Activated CD4-positive, alpha-beta T cell treated with anti-CD3 and anti-CD28 coated beads, Interleukin-2, amount 10 ng/mL, durations not matched to agents 7 days and 5 days (primary cell): ENCODE measurements at regions of chr17 and their contacts with region 1.

Region 1: GRCh38 chr17:45270828-45271418 is 9.0 kb upstream of the SPATA32 start:
- DNase-seq: peak; percentile 58
- H3K4me3 Mint-ChIP-seq: no peak overlapping the region
- H3K27ac Mint-ChIP-seq: no peak overlapping the region
- H3K4me1 Mint-ChIP-seq: no peaks in the 10 kb centered on the region
- H3K27me3 Mint-ChIP-seq: no peaks in the 10 kb centered on the region

Region 2: GRCh38 chr17:45123930-45124796 is 146.8 kb before region 1 on chr17:
- CTCF ChIA-PET with region 1: no interaction called
- POLR2A ChIA-PET with region 1: no interaction called
- DNase-seq: no peak
- H3K4me3 Mint-ChIP-seq: no peak overlapping the region
- H3K27ac Mint-ChIP-seq: no peak overlapping the region
- H3K4me1 Mint-ChIP-seq: no peaks in the 10 kb centered on the region
- H3K27me3 Mint-ChIP-seq: peaks cover 7% of the 10 kb centered on the region

Region 3: DNA sequence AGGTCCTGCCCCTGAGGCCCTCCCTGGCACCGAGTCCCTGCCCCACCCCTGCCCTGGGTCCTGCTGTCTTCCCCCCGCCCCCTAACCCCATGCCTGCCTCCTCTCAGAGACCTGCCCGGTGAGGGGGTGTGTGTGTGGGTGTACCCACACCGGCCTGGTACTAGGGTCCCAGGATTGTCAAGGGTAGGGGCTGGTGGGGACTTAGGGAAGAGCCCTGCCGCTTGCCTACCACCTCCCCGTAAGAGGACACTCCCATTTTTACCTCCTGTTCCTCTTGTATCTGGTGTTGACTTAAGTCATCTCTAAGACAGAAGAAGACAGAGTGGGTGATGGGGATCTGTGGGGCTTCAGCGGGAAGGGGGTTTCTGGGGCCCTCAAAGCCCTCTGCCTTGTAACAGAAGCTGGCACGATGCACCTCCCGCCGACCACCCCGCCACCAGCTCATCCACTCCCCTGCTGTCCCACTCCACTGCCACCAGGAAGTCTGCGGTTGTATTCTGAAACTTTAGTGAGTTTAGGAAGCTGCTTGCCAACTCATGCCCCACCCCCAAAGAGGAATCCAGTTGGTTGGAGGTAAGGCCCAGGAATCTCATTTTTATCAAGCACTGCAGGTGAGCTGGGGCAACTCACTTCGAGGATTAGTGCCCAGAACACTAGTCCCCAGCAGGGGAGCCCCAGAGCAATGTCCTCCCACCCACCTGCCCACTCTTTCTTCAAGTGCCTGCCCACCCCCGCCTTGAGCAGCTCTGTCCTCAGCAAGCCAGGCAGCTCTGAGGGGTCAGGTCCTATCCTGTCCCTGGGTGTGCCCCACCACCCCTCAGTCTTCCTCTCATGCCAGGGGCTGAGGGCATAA is 14.6 kb before region 1 on chr17:
- CTCF ChIA-PET with region 1: interaction called, 15 read pairs
- POLR2A ChIA-PET with region 1: no interaction called
- DNase-seq: peak; percentile 26
- H3K4me3 Mint-ChIP-seq: no peak overlapping the region
- H3K27ac Mint-ChIP-seq: peak overlapping the region; percentile 75
- H3K4me1 Mint-ChIP-seq: peaks cover 54% of the 10 kb centered on the region
- H3K27me3 Mint-ChIP-seq: no peaks in the 10 kb centered on the region

Region 4: DNA sequence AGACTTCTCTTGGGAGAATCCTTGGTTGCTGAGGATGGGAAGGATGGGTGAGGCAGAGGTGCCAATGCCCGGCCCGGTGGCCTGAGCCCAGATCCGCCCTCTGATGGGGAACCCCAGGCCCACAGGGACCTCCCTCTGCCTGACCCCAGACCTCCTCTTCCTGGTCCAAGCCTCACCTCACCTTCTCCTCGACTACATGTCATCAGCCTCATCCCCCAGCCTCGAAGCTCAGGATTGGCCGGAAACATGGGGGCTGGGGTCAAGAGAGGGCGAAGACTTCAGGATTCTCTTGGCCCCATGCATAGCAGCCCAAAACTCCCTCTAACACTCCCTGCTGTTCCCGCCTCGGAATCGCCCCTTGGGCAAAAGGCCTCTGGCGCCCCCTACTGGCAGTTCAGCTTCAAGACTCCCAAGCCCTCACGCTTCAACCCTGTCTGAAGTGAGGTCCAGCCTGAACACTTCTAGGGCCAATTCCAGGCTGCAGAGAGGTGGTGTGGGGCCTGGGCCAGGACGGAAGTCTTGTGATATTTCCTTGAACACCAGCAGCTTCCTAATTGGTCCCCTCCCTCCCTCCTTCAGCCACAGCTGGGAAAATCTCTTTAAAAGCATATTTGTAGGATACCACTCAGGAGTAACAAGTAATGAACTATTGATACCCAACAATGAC is 114.5 kb after region 1 on chr17:
- CTCF ChIA-PET with region 1: interaction called, 55 read pairs
- POLR2A ChIA-PET with region 1: no interaction called
- DNase-seq: peak; percentile 91
- H3K4me3 Mint-ChIP-seq: no peak overlapping the region
- H3K27ac Mint-ChIP-seq: peak overlapping the region; percentile 80
- H3K4me1 Mint-ChIP-seq: peaks cover 20% of the 10 kb centered on the region
- H3K27me3 Mint-ChIP-seq: peaks cover 14% of the 10 kb centered on the region

Region 5: GRCh38 chr17:45631941-45632340 is 361.0 kb after region 1 on chr17:
- CTCF ChIA-PET with region 1: no interaction called
- POLR2A ChIA-PET with region 1: no interaction called
- DNase-seq: no peak
- H3K4me3 Mint-ChIP-seq: no peak overlapping the region
- H3K27ac Mint-ChIP-seq: no peak overlapping the region
- H3K4me1 Mint-ChIP-seq: no peaks in the 10 kb centered on the region
- H3K27me3 Mint-ChIP-seq: no peaks in the 10 kb centered on the region